ENCODE measurements at regions of chr11 and their contacts with region 1.

Region 1: DNA sequence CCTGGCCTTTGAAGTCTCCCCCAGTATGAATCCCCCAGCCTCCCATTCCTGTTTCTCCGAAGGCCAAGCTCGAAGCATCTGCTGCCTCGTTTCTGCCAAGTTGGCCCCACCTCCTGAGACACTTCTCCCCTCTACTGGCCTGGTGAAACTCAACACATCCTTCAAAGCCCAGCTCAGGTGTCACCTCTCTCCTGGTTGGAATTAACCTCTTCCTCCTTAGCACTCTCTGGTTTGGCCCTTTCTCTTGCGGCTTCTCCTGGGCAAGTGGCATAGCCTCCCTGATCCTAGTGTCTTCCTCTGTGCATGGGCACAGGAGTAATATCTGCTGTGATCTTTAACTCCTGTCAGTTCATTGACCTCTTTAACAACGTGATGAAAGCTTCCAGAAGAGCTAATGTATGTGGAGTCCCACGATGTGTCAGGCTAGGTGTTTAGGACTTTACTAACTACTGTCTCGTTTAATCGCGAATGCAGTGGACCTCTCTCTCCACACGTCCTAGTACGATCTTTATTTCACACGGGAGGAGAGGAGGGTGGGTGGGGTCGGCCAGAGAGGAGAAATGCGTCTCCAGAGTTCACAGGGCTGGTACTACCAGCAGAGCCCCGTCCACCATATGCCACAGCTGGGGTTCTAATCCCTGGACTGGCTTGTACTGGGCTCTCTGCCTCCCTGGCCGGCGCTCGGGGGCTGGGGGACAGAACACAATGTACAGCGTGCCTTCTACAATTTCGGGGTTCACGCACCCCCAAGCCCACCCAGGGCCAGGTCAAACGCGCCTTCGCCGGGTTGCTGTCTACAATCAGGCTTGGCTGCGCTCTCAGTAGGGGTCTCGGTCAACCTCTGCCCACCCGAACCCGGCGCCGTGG is 748 bp upstream of the PTPRJ start:
- DNase-seq: peak in 1 of 2 experiments; percentile 55
- H3K4me3 ChIP-seq: peak overlapping the region; percentile 51 to 85 (median 60)
- H3K27ac ChIP-seq: no peak overlapping the region
- H3K4me1 ChIP-seq: peaks cover 10 to 15% (median 13%) of the 10 kb centered on the region in 4 experiments
- H3K27me3 ChIP-seq: peaks cover 0 to 7% (median 4%) of the 10 kb centered on the region in 4 experiments; a peak in 1 of 7 replicates
- CTCF ChIP-seq: peak; percentile 5 to 37 (median 22); a peak in 2 of 4 replicates
- EP300 ChIP-seq: no peak
- POLR2A ChIP-seq: no peak
- RAD21 ChIP-seq: peak; percentile 48 to 58

Region 2: DNA sequence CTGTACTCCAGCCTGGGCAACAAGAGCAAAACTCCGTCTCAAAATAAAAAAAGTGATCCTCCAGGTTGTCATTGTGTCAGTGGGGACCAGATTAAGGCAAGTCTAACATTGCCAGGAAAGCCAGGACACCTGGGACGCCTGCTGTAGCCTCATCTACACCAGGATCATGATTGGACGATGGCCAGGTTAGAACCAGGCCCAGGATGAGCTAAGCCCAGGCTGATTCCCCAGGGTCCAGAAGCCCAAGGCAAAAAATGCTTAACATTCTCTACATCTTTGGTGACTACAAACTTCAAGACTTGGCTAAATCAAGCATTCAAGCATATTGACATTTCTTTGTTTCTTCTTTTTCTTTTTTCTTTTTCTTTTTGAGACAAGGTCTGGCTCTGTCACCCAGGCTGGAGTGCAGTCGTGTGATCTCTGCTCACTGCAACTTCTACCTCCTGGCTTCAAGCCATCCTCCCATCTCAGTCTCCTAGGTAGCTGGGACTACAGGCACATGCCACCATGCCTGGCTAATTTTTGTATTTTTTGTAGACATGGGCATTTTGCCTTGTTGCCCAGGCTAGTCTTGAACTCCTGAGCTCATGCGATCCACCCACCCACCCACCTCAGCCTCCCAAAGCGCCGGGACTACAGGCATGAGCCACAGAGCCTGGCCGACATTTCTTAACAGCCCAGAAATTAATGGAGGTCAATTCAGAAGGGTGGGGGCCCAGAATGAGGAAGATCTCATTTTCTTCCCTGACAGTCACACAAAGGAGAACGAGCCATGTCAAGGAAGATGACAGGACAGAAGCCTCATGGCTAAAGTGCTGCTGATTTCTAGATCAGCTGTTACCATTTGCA is 11.8 kb before region 1 on chr11:
- CTCF ChIA-PET with region 1: interaction called, 12 read pairs
- POLR2A ChIA-PET with region 1: interaction called, 4 read pairs
- DNase-seq: no peak
- H3K4me3 ChIP-seq: no peak overlapping the region
- H3K27ac ChIP-seq: no peak overlapping the region
- H3K4me1 ChIP-seq: no peaks in the 10 kb centered on the region; a peak in 1 of 7 replicates
- H3K27me3 ChIP-seq: no peaks in the 10 kb centered on the region
- CTCF ChIP-seq: no peak
- EP300 ChIP-seq: no peak
- POLR2A ChIP-seq: no peak
- RAD21 ChIP-seq: no peak

Measured in H1 (cell line).